ENCODE measurements at regions of chr3 and their contacts with region 1.

Region 1: GRCh38 chr3:136752422-136753325 is 496 bp upstream of the STAG1 start:
- DNase-seq: peak; percentile 98 to 99
- ATAC-seq: peak; percentile 94 to 99 (median 96)
- H3K4me3 ChIP-seq: peak overlapping the region; percentile 33 to 94 (median 71)
- H3K27ac ChIP-seq: peak overlapping the region; percentile 96 to 99 (median 98)
- H3K4me1 ChIP-seq: peaks cover 4 to 40% (median 30%) of the 10 kb centered on the region in 9 donors
- H3K27me3 ChIP-seq: no peaks in the 10 kb centered on the region
- CTCF ChIP-seq: peak in 4 of 9 donors; percentile 20 to 54 (median 46)

Region 2: GRCh38 chr3:136196401-136197158 is 556.1 kb before region 1 on chr3:
- intact Hi-C with region 1: loop called in 5 of 10 experiments (anchors 2 to 5 kb)
- DNase-seq: peak; percentile 99
- ATAC-seq: peak; percentile 89 to 96 (median 94)
- H3K4me3 ChIP-seq: peak overlapping the region; percentile 70 to 95 (median 80)
- H3K27ac ChIP-seq: peak overlapping the region; percentile 98 to 100 (median 100)
- H3K4me1 ChIP-seq: peaks cover 3 to 39% (median 31%) of the 10 kb centered on the region in 9 donors
- H3K27me3 ChIP-seq: no peaks in the 10 kb centered on the region
- CTCF ChIP-seq: peak in 1 of 9 donors; percentile 10

Region 3: GRCh38 chr3:136385457-136385856 is 367.2 kb before region 1 on chr3:
- intact Hi-C with region 1: loop called in 8 of 10 experiments (anchors 2 to 10 kb)
- DNase-seq: no peak
- ATAC-seq: no peak
- H3K4me3 ChIP-seq: no peak overlapping the region
- H3K27ac ChIP-seq: no peak overlapping the region
- H3K4me1 ChIP-seq: peaks cover 0 to 6% (median 0%) of the 10 kb centered on the region in 9 donors
- H3K27me3 ChIP-seq: no peaks in the 10 kb centered on the region
- CTCF ChIP-seq: no peak

Region 4: GRCh38 chr3:136545664-136546268 is 206.9 kb before region 1 on chr3:
- intact Hi-C with region 1: loop called in 3 of 10 experiments (anchors 2 to 10 kb)
- DNase-seq: no peak
- ATAC-seq: no peak
- H3K4me3 ChIP-seq: no peak overlapping the region
- H3K27ac ChIP-seq: no peak overlapping the region
- H3K4me1 ChIP-seq: peaks cover 0 to 14% (median 0%) of the 10 kb centered on the region in 9 donors
- H3K27me3 ChIP-seq: no peaks in the 10 kb centered on the region
- CTCF ChIP-seq: peak in 6 of 9 donors; percentile 22 to 50 (median 36)

Region 5: GRCh38 chr3:136949708-136950107 is 197.0 kb after region 1 on chr3:
- intact Hi-C with region 1: loop called in 1 of 10 experiments (anchors 10 kb)
- DNase-seq: no peak
- ATAC-seq: no peak
- H3K4me3 ChIP-seq: no peak overlapping the region
- H3K27ac ChIP-seq: peak overlapping the region in 1 of 10 donors; percentile 17
- H3K4me1 ChIP-seq: peaks cover under 1 to 49% (median 20%) of the 10 kb centered on the region in 9 donors
- H3K27me3 ChIP-seq: no peaks in the 10 kb centered on the region
- CTCF ChIP-seq: peak in 4 of 9 donors; percentile 23 to 42 (median 33)